Activated CD8-positive, alpha-beta memory T cell treated with anti-CD3 and anti-CD28 coated beads, Interleukin-2, amount 10 ng/mL, durations not matched to agents 7 days and 5 days (primary cell): ENCODE measurements at regions of chr11 and their contacts with region 1.

Region 1: DNA sequence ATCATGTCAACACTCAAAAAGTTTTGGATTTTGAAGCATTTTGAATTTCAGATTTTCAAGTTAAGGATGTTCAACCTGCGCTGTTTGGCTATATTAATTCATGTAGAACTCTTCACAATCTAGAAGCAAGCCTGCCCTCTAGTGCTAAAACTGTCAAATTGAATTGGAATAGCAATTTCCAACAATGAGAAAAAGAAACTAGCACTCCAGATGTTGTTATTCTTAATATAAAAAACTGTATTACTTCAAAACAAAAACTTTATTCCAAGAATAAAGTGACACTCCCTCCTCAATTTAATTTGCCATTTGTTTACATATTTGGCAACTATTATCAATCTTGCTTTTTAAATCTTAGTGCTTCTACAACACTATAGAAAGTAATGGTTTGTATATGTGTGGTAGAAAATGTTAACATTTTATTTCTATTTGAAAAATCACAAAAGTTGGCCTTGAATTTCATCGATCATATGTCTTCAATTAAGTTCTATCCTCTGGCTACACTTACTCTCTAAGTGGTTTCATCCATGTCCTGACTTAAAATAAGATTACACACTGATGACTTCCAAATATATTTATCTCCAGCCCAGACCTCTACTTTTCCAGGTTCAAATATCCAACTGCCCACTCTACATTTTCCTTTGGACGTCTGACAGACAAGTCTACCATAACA is 36.6 kb downstream of the DCUN1D5 start:
- DNase-seq: no peak
- ATAC-seq: peak; percentile 70
- H3K4me3 Mint-ChIP-seq: no peak overlapping the region
- H3K27ac Mint-ChIP-seq: no peak overlapping the region
- H3K4me1 Mint-ChIP-seq: no peaks in the 10 kb centered on the region
- H3K27me3 Mint-ChIP-seq: no peaks in the 10 kb centered on the region

Region 2: GRCh38 chr11:102882389-102883024 is 172.8 kb before region 1 on chr11:
- CTCF ChIA-PET with region 1: no interaction called
- DNase-seq: no peak
- ATAC-seq: no peak
- H3K4me3 Mint-ChIP-seq: no peak overlapping the region
- H3K27ac Mint-ChIP-seq: no peak overlapping the region
- H3K4me1 Mint-ChIP-seq: peaks cover 2% of the 10 kb centered on the region
- H3K27me3 Mint-ChIP-seq: peaks cover 3% of the 10 kb centered on the region

Region 3: GRCh38 chr11:103035791-103036434 is 19.4 kb before region 1 on chr11:
- CTCF ChIA-PET with region 1: interaction called, 13 read pairs
- DNase-seq: peak; percentile 66
- ATAC-seq: peak; percentile 87
- H3K4me3 Mint-ChIP-seq: peak overlapping the region; percentile 8
- H3K27ac Mint-ChIP-seq: peak overlapping the region; percentile 87
- H3K4me1 Mint-ChIP-seq: peaks cover 18% of the 10 kb centered on the region
- H3K27me3 Mint-ChIP-seq: no peaks in the 10 kb centered on the region